ENCODE measurements at regions of chr7 and their contacts with region 1.

Region 1: DNA sequence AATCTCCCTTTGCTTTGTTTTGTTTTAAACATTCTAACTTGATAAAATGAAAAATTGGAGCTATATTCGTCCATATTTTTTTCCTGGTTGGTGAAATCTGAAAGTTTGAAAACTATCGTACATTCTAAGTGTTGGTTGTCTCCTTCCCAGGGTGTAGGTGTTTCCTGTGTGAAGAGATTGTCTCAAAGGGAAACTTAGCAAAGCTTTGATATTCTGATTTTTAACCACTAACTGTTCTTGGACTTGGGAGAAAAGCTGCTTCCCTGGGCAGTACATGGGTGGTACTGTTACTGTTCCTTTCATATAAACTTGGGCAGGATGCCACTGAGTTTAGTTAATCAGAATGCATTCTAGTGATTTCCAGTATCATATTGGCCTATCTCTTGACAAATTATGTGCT is 253.5 kb upstream of the LRGUK start:
- H3K4me3 ChIP-seq: no peak overlapping the region
- H3K27ac ChIP-seq: no peak overlapping the region
- H3K4me1 ChIP-seq: no peaks in the 10 kb centered on the region
- CTCF ChIP-seq: no peak

Region 2: GRCh38 chr7:133517766-133518165 is 355.9 kb before region 1 on chr7:
- CTCF ChIA-PET with region 1: no interaction called
- POLR2A ChIA-PET with region 1: no interaction called
- H3K4me3 ChIP-seq: no peak overlapping the region
- H3K27ac ChIP-seq: no peak overlapping the region
- H3K4me1 ChIP-seq: no peaks in the 10 kb centered on the region
- CTCF ChIP-seq: no peak

Region 3: DNA sequence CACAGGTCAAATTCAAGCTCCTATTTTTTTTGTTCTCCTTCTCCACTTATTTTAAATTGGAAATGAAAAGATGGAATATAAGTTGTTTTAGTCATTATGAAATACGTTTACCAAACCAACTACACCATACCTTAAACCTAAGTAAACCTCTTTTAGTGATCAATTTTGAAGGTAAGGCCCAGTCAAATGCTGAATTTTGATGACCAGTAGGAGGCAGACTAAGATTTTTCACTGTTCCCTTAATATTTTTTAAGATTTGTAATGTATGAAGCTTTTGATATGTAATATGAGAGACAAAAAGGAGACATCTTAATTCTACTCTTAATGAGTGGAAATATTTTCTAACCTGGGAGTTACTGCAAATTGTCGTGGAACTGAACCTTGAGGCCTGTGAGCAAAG is 309.1 kb before region 1 on chr7:
- CTCF ChIA-PET with region 1: no interaction called
- POLR2A ChIA-PET with region 1: no interaction called
- H3K4me3 ChIP-seq: no peak overlapping the region
- H3K27ac ChIP-seq: no peak overlapping the region
- H3K4me1 ChIP-seq: no peaks in the 10 kb centered on the region
- CTCF ChIP-seq: no peak

Region 4: DNA sequence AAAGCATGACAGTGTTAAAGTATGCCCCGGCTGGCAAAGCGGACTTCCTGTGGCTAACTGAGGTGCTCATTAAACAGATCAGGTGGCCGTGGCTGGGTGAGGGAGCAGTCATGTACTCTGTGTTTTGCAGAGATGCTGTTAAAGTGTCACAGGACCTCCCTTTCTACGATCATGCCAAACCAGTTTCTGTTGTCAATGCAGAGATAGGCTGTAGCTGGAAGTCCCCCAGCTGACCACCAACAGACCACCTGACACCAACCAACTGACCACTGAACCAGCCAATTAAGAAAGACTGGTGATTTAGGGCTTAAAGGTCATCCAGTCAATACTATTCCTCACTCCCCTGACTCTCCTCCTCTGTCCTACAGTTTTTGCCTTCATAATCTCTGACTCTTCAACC is 177.6 kb before region 1 on chr7:
- CTCF ChIA-PET with region 1: no interaction called
- POLR2A ChIA-PET with region 1: no interaction called
- H3K4me3 ChIP-seq: no peak overlapping the region
- H3K27ac ChIP-seq: no peak overlapping the region
- H3K4me1 ChIP-seq: 0 out of 2 replicates have a peak, but pooled peaks cover 5% of the 10 kb centered on the region
- CTCF ChIP-seq: no peak

Region 5: GRCh38 chr7:133853706-133854276 is 19.8 kb before region 1 on chr7:
- CTCF ChIA-PET with region 1: interaction called, 20 read pairs
- POLR2A ChIA-PET with region 1: no interaction called
- H3K4me3 ChIP-seq: no peak overlapping the region
- H3K27ac ChIP-seq: no peak overlapping the region
- H3K4me1 ChIP-seq: no peaks in the 10 kb centered on the region
- CTCF ChIP-seq: peak; percentile 83

Measured in HEK293 (cell line).